Right ventricle myocardium inferior (tissue), 1 donor: ENCODE measurements at regions of chr3 and their contacts with region 1.

Region 1: DNA sequence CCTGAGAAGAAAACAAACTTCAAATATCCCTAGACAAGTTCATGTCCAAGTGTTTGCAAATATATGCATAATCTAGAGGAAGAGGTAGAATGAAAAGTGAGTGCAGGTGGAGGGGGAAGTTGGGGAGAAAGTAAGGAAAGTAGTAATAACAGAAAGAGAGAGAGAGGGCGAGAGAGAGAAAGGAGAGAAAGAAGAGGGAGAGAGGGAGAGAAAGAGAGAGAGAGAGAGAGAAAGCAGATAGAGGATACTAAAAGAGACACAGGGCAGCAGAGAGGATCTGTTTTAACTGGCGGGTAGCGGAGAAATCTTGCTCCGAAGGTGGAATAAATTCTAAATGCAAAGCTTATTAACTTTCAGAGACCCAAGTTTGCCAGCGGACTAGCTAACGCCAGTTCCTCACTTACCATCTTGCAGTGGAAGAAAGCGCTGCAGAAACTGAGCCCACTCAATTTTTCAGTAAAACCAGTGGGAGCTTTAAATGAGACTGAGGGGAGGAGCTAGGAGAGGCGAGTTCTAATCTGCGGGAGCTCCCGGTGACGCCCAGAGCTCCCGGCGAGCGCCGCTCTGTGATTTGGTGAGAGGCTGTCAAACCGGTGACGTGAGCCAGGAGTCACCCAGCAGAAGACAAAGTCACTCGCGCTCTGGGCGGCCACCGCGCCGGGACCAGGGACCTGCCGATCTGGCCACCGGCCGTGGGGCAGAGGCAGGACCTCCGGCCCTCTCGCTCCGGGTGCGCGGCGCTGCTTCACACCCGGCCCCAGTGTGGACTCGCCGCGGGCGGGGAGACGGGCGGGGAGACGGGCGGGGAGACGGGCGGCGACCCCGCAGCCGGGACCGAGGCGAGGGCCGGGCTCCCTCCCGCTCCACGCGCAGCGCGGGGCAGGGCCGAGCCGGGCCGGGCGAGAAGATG is at the start of gene GMNC:
- DNase-seq: peak; percentile 92
- ATAC-seq: peak; percentile 96
- total RNA-seq, gene GMNC: 4.4 TPM

Region 2: GRCh38 chr3:190491533-190492054 is 370.9 kb before region 1 on chr3:
- intact Hi-C with region 1: loop called (anchors 10 kb)
- DNase-seq: peak; percentile 72
- ATAC-seq: peak; percentile 86

Region 3: DNA sequence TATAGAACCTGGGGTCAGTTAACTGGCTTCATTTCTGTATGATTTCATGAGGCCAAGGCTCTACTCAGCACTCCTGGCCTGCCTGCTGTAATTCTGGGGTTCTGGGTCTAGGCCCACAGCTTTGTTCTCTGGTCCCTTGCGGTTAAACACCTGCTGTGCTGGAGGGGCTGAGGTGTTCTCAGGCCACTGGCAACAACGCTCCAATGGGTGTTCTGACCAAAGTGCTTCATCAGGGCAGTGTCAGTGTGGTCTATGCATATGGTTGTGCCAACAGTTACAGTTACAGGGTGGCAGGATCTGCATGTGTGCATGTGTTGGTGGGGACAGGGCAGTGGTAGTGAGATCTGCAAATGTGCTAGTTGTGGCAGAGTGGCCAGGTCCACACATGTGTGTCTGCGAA is 64.2 kb after region 1 on chr3:
- intact Hi-C with region 1: no loop called
- DNase-seq: no peak
- ATAC-seq: no peak